HEK293T (cell line): ENCODE measurements at regions of chr3 and their contacts with region 1.

Region 1: GRCh38 chr3:29764041-29764440 is 483.2 kb downstream of the RBMS3 start:
- DNase-seq: no peak

Region 2: GRCh38 chr3:28916713-28917499 is 847.1 kb before region 1 on chr3:
- CTCF ChIA-PET with region 1: interaction called, 10 read pairs
- POLR2A ChIA-PET with region 1: no interaction called
- DNase-seq: peak; percentile 26